ENCODE measurements at regions of chr20 and their contacts with region 1.

Region 1: GRCh38 chr20:31822421-31823330 is 3.5 kb downstream of the MYLK2 start:
- DNase-seq: peak; percentile 85 to 93
- ATAC-seq: peak; percentile 76 to 82 (median 79)
- H3K4me3 ChIP-seq: peak overlapping the region; percentile 78
- H3K27ac ChIP-seq: peak overlapping the region; percentile 80
- H3K4me1 ChIP-seq: peaks cover 42% of the 10 kb centered on the region
- H3K27me3 ChIP-seq: no peaks in the 10 kb centered on the region
- CTCF ChIP-seq: peak; percentile 100

Region 2: DNA sequence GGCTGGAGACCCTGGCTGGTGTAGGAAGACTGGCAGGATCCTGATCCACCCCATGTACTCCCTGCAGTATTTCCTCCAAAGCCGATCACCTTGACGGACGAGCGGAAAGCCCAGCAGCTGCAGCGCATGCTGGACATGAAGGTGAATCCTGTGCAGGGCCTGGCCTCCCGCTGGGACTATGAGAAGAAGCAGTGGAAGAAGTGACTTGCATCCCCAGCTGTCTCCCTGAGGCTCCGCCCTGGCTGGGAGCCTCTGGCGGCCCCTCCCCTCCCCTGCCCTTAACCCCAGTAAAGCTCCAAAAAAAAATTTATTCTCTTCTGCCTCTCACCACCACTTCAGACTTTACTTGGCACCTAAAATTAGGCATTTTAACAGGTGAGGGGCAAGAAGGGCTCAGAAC is 178.0 kb before region 1 on chr20:
- intact Hi-C with region 1: no loop called
- DNase-seq: no peak
- ATAC-seq: no peak
- H3K4me3 ChIP-seq: no peak overlapping the region
- H3K27ac ChIP-seq: no peak overlapping the region
- H3K4me1 ChIP-seq: no peaks in the 10 kb centered on the region
- H3K27me3 ChIP-seq: peaks cover 0 to 4% (median 0%) of the 10 kb centered on the region in 3 donors
- CTCF ChIP-seq: no peak

Region 3: GRCh38 chr20:31661625-31662371 is 160.9 kb before region 1 on chr20:
- intact Hi-C with region 1: loop called in 1 of 2 experiments (anchors 10 kb)
- DNase-seq: peak; percentile 84 to 90
- ATAC-seq: peak; percentile 84 to 90 (median 84)
- H3K4me3 ChIP-seq: peak overlapping the region; percentile 49
- H3K27ac ChIP-seq: peak overlapping the region; percentile 52
- H3K4me1 ChIP-seq: peaks cover 13% of the 10 kb centered on the region
- H3K27me3 ChIP-seq: no peaks in the 10 kb centered on the region
- CTCF ChIP-seq: peak; percentile 89

Region 4: DNA sequence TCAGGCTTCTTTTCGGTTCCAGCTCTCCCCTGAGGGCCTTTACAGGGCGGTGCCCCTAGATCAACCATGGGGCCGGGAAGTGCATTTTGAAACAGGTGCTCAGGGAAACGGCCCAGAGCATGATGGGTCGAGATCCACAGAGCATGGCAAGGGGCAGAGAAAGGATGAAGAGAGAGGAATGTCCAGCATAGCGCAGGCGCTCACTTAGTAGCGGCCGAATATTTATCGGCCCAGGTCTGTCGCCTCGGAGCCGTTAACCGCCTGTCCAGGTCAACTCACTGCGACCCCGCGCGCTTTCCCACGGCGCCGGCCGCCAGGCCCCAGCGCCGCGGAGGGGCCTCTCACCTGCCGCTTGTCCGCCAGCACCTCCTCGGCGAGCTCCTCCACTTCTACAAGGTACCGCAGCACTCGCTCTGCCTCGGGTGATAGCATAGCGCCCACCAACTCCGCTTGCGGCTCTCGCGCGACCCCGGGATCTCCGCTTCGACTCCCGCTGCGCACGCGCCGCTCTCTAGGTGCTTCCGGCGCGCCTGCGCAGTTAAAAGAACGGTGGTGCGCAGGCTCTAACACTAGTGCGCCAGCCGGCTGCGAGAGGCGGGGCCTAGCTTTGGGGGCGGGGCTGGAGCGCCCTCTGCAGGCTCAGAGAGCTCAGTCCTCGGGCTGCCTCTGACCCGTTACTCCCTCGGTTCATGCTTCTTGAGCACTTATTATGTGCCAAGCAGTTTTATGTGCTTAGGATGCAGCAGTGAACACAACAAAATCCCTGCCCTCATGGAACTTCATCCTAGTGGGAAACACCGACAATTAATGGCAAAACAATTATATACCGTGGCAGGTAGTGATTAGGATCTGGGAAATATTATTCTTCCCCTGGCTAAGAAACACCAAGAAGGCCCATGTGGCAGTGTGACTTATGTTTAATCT is 129.1 kb after region 1 on chr20 and contains the start of gene PDRG1:
- intact Hi-C with region 1: loop called in 1 of 2 experiments (anchors 5 kb)
- DNase-seq: peak; percentile 96 to 98
- ATAC-seq: peak; percentile 98 to 100 (median 99)
- H3K4me3 ChIP-seq: peak within 1 kb of the TSS; percentile 95
- H3K27ac ChIP-seq: peak within 1 kb of the TSS; percentile 85
- H3K4me1 ChIP-seq: peaks cover 11% of the 10 kb centered on the region
- H3K27me3 ChIP-seq: peaks cover 0 to 11% (median 0%) of the 10 kb centered on the region in 3 donors
- CTCF ChIP-seq: peak; percentile 92
- total RNA-seq, gene PDRG1: 7.8 to 15.8 (median 11.1) TPM

Region 5: DNA sequence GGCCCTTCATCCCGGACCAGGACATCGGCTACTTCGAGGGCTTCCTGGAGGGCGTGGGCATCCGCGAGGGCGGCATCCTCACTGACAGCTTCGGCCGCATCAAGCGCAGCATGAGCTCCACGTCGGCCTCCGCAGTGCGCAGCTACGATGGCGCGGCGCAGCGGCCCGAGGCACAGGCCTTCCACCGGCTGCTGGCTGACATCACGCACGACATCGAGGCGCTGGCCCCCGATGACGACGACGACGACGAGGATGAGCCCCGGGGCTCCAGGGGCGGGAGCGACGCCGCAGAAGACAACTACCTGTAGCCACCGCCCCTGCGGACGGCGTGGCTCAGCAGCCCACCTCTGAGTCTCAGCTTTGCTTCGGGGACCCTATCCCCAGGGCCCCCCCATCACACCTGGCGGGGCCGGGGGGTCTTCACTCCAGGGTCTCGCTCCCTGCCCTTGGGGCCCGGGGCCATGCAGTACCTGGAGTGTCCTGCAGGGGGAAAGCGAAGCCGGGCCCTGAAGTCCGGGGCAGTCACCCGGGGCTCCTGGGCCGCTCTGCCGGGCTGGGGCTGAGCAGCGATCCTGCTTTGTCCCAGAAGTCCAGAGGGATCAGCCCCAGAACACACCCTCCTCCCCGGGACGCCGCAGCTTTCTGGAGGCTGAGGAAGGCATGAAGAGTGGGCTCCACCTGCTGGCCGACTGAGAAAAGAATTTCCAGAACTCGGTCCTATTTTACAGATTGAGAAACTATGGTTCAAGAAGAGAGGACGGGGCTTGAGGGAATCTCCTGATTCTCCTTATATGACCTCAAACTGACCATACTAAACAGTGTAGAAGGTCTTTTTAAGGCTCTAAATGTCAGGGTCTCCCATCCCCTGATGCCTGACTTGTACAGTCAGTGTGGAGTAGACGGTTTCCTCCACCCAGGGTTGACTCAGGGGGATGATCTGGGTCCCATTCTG is 208.6 kb after region 1 on chr20:
- intact Hi-C with region 1: loop called (anchors 2 to 10 kb)
- DNase-seq: peak; percentile 77 to 87
- ATAC-seq: peak; percentile 84 to 94 (median 87)
- H3K4me3 ChIP-seq: peak overlapping the region; percentile 50
- H3K27ac ChIP-seq: no peak overlapping the region
- H3K4me1 ChIP-seq: no peaks in the 10 kb centered on the region
- H3K27me3 ChIP-seq: peaks cover 0 to 32% (median under 1%) of the 10 kb centered on the region in 3 donors
- CTCF ChIP-seq: peak; percentile 93

Region 6: DNA sequence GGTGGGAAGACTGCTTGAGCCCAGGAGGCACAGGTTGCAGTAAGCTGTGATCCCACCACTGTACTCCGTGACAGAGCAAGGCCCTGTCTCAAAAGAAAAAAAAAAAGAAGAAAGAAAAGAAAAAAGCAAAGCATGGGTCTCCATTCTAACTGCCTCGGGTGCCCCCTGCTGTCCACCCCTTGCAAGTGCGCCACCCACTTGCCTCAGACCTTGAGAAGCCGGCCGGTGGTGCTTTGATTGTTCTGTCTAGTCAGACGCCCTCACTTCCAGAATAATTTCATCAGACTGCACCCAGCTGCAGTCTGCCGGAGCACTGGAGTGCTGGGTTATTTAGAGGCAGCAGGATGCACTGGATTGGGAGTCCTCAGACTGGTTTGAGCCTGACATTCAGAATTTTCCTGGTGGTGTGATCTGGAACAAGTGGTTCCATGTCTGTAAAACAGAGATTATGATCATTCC is 269.2 kb after region 1 on chr20:
- intact Hi-C with region 1: loop called in 1 of 2 experiments (anchors 5 kb)
- DNase-seq: peak; percentile 78 to 84
- ATAC-seq: peak; percentile 71 to 85 (median 82)
- H3K4me3 ChIP-seq: no peak overlapping the region
- H3K27ac ChIP-seq: no peak overlapping the region
- H3K4me1 ChIP-seq: no peaks in the 10 kb centered on the region
- H3K27me3 ChIP-seq: no peaks in the 10 kb centered on the region
- CTCF ChIP-seq: peak; percentile 92

Measured in psoas muscle (tissue), 8 donors.